ENCODE measurements at regions of chr11 and their contacts with region 1.

Region 1: DNA sequence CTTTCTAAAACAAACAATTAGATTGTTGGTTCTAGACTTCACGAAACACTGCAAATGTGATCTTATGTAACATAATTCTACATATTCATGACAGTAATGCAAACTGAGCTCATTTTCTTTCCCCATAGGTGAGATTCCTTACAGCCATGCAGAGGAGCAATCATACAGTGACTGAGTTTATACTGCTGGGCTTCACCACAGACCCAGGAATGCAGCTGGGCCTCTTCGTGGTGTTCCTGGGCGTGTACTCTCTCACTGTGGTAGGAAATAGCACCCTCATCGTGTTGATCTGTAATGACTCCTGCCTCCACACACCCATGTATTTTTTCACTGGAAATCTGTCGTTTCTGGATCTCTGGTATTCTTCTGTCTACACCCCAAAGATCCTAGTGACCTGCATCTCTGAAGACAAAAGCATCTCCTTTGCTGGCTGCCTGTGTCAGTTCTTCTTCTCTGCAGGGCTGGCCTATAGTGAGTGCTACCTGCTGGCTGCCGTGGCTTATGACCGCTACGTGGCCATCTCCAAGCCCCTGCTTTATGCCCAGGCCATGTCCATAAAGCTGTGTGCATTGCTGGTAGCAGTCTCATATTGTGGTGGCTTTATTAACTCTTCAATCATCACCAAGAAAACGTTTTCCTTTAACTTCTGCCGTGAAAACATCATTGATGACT is 1.5 kb downstream of the OR9G1 start:
- DNase-seq: peak in 1 of 2 experiments; percentile 8
- H3K4me3 ChIP-seq: no peak overlapping the region
- H3K4me3 Mint-ChIP-seq: no peak overlapping the region
- H3K27ac Mint-ChIP-seq: no peak overlapping the region
- H3K4me1 ChIP-seq: no peaks in the 10 kb centered on the region
- H3K4me1 Mint-ChIP-seq: no peaks in the 10 kb centered on the region
- H3K27me3 ChIP-seq: no peaks in the 10 kb centered on the region
- H3K27me3 Mint-ChIP-seq: peaks cover 11% of the 10 kb centered on the region
- CTCF ChIP-seq: no peak

Region 2: GRCh38 chr11:56522008-56522407 is 178.4 kb before region 1 on chr11:
- CTCF ChIA-PET with region 1: no interaction called
- POLR2A ChIA-PET with region 1: no interaction called
- intact Hi-C with region 1: loop called (anchors 10 kb)
- DNase-seq: peak in 1 of 2 experiments; percentile 28
- H3K4me3 ChIP-seq: no peak overlapping the region
- H3K4me3 Mint-ChIP-seq: no peak overlapping the region
- H3K27ac Mint-ChIP-seq: no peak overlapping the region
- H3K4me1 ChIP-seq: no peaks in the 10 kb centered on the region
- H3K4me1 Mint-ChIP-seq: no peaks in the 10 kb centered on the region
- H3K27me3 ChIP-seq: no peaks in the 10 kb centered on the region
- H3K27me3 Mint-ChIP-seq: no peaks in the 10 kb centered on the region
- CTCF ChIP-seq: peak; percentile 43 to 51

Region 3: GRCh38 chr11:56637500-56637899 is 62.9 kb before region 1 on chr11:
- CTCF ChIA-PET with region 1: no interaction called
- POLR2A ChIA-PET with region 1: no interaction called
- intact Hi-C with region 1: loop called (anchors 5 kb)
- DNase-seq: no peak
- H3K4me3 ChIP-seq: no peak overlapping the region
- H3K4me3 Mint-ChIP-seq: no peak overlapping the region
- H3K27ac Mint-ChIP-seq: no peak overlapping the region
- H3K4me1 ChIP-seq: no peaks in the 10 kb centered on the region
- H3K4me1 Mint-ChIP-seq: no peaks in the 10 kb centered on the region
- H3K27me3 ChIP-seq: no peaks in the 10 kb centered on the region
- H3K27me3 Mint-ChIP-seq: peaks cover 6% of the 10 kb centered on the region
- CTCF ChIP-seq: no peak

Region 4: DNA sequence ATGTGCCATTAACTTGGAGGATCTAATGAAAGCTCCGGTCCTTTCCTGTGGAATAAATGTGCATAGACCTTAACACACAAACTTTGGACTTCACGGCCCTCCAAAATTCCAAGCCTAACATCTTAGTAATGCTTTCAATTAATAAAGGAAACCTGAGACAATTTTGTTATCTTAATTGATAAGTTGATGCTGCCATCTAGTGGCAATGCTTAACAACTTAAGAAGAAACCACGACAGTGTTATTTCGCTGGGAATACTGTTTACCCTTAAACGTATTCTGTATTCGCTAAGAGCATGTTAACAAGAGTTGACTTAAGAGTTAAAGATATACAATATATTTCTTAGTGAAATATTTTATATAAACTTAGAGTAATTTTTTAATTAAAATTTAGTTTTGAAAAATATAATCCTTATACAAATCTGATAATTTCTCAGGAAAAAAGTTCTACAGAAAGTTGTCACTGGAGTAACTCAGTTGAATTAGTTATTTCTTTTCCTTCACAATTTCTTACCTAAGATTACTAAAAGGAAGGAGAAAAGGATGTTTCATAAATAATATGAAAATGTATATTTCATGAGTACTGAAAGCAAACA is 83.2 kb after region 1 on chr11:
- CTCF ChIA-PET with region 1: no interaction called
- POLR2A ChIA-PET with region 1: no interaction called
- intact Hi-C with region 1: no loop called
- DNase-seq: peak in 1 of 2 experiments; percentile 46
- H3K4me3 ChIP-seq: no peak overlapping the region
- H3K4me3 Mint-ChIP-seq: no peak overlapping the region
- H3K27ac Mint-ChIP-seq: no peak overlapping the region
- H3K4me1 ChIP-seq: no peaks in the 10 kb centered on the region
- H3K4me1 Mint-ChIP-seq: no peaks in the 10 kb centered on the region
- H3K27me3 ChIP-seq: no peaks in the 10 kb centered on the region
- H3K27me3 Mint-ChIP-seq: peaks cover 4% of the 10 kb centered on the region
- CTCF ChIP-seq: peak; percentile 51 to 63